ENCODE measurements at regions of chr22 and their contacts with region 1.

Region 1: DNA sequence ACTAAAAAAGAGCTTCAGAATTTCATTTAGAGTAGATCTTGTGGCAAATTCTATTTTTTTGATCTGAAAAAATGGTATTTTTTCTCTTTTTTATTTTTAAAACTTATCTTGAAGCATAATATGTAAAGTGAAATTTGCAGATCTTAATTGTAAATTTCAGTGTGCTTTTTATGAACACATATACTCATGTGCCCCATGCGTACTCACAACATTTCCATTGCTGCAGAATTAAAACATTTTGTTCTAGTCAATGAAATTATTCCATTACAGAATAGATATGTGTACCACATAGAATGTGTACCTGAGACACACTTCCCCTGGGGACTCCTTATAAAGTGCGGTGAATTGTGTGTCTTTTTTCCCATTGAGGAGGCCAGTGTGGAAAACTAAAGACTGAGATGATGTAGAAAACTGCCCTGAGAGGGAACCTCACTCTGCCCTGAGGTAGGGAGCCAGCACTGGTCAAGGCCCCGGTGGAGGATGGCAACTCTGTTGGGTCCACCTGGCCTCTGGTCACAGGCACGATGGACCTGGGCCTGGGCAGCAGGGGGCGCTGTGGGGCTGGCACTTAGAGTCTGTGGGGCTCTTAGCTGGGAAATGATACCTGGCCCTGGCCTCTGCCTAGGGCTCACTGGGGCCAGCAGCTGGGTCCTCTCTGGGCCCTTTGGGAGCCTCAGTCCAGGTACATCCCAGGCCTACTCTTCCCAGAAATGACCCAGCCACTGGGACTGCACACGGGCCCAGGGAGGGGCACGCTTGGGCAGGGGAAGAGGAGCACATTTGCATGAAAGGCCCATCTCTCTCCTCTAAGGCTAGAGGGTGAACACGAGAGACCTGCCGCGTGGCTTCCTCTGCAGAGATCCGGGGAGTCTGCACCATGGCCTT is 77.9 kb upstream of the TOP3B start:
- DNase-seq: peak; percentile 75
- ATAC-seq: peak; percentile 68
- H3K4me3 ChIP-seq: no peak overlapping the region
- H3K4me3 Mint-ChIP-seq: no peak overlapping the region
- H3K27ac ChIP-seq: no peak overlapping the region
- H3K27ac Mint-ChIP-seq: peak overlapping the region; percentile 73
- H3K4me1 ChIP-seq: peaks cover 33 to 36% of the 10 kb centered on the region in 2 donors
- H3K4me1 Mint-ChIP-seq: peaks cover 37% of the 10 kb centered on the region
- H3K27me3 ChIP-seq: no peaks in the 10 kb centered on the region
- H3K27me3 Mint-ChIP-seq: peaks cover 3% of the 10 kb centered on the region
- CTCF ChIP-seq: peak; percentile 86

Region 2: GRCh38 chr22:21916309-21916918 is 144.0 kb before region 1 on chr22:
- CTCF ChIA-PET with region 1: no interaction called
- POLR2A ChIA-PET with region 1: no interaction called
- intact Hi-C with region 1: no loop called
- DNase-seq: no peak
- ATAC-seq: no peak
- H3K4me3 ChIP-seq: no peak overlapping the region
- H3K4me3 Mint-ChIP-seq: no peak overlapping the region
- H3K27ac ChIP-seq: no peak overlapping the region
- H3K27ac Mint-ChIP-seq: no peak overlapping the region
- H3K4me1 ChIP-seq: no peaks in the 10 kb centered on the region
- H3K4me1 Mint-ChIP-seq: peaks cover 3% of the 10 kb centered on the region
- H3K27me3 ChIP-seq: no peaks in the 10 kb centered on the region
- H3K27me3 Mint-ChIP-seq: no peaks in the 10 kb centered on the region
- CTCF ChIP-seq: no peak

Region 3: DNA sequence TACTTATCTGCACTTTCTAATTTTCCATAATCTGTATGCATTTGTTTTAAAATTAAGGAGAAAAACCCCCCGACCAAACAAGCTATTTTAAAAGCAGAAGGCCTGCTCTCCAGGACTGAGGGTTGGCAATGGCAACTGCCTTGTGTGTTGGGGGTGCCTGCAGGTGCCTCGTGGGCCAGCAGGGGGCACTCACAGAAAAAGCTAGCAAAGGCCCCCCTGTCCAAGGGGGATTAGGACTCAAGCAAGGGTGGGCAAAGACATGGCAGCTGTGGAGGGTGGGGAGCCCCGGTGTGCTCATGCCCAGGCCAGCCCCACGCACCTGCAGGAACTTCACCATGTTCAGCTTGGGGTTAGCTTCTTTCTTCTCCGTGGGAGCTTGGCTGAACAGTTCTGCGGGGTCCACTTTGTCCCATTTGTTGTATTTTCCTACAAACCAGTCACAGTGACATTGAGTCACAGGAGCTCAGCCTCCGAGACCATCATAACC is 88.1 kb before region 1 on chr22:
- CTCF ChIA-PET with region 1: interaction called, 20 read pairs
- POLR2A ChIA-PET with region 1: no interaction called
- intact Hi-C with region 1: no loop called
- DNase-seq: peak; percentile 71
- ATAC-seq: peak; percentile 78
- H3K4me3 ChIP-seq: no peak overlapping the region
- H3K4me3 Mint-ChIP-seq: no peak overlapping the region
- H3K27ac ChIP-seq: no peak overlapping the region
- H3K27ac Mint-ChIP-seq: no peak overlapping the region
- H3K4me1 ChIP-seq: no peaks in the 10 kb centered on the region
- H3K4me1 Mint-ChIP-seq: peaks cover 6% of the 10 kb centered on the region
- H3K27me3 ChIP-seq: no peaks in the 10 kb centered on the region
- H3K27me3 Mint-ChIP-seq: no peaks in the 10 kb centered on the region
- CTCF ChIP-seq: peak; percentile 96

Region 4: DNA sequence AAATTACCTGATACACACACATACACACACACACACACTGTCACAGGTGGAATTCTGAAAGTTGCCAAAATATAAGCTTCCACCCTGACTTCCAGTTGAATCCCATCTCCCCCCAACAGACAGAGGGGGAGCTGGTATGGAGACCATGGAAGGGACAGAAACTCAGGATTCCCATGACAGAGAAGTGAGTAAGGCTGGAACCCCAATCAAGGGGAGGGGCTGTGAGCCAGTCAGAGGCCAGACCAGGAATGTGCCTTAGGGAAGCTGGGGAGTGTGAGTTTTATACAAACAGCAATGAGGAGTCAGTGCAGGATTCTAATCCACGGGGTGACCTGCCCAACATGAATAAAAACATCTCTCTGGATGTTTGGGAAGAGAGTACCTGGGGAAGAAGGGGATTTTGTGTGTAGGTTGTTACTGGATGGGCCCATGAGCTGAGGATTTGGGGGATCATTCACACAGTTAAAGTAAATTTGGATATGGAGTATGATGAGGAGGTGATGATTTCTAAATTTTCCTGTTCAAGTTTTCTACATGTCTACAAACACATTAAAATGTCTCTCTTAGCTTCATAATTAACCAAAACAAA is 39.2 kb before region 1 on chr22:
- CTCF ChIA-PET with region 1: no interaction called
- POLR2A ChIA-PET with region 1: no interaction called
- intact Hi-C with region 1: no loop called
- DNase-seq: no peak
- ATAC-seq: no peak
- H3K4me3 ChIP-seq: no peak overlapping the region
- H3K4me3 Mint-ChIP-seq: no peak overlapping the region
- H3K27ac ChIP-seq: no peak overlapping the region
- H3K27ac Mint-ChIP-seq: no peak overlapping the region
- H3K4me1 ChIP-seq: peaks cover 29 to 37% of the 10 kb centered on the region in 2 donors
- H3K4me1 Mint-ChIP-seq: peaks cover 46% of the 10 kb centered on the region
- H3K27me3 ChIP-seq: no peaks in the 10 kb centered on the region
- H3K27me3 Mint-ChIP-seq: no peaks in the 10 kb centered on the region
- CTCF ChIP-seq: no peak

Region 5: DNA sequence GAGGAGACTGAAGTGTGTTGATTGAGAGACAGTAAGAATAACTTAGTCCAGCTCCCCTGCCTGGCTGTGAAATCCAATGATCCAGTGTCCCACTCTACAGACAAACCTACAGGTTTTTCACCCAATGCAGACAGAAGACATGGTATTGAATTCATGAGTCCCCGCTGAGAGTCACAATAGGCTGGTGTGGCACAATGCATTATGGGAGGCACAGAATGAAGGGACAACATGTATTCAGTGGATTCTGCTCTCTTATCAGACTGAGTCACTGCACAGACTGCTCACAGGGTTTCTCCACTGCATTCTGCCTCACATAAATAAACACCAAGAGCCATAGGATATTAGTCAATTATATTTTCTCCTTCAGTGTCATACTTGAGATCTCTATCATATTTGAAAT is 22.7 kb before region 1 on chr22:
- CTCF ChIA-PET with region 1: interaction called, 122 read pairs
- POLR2A ChIA-PET with region 1: no interaction called
- intact Hi-C with region 1: loop called (anchors 2 kb)
- DNase-seq: no peak
- ATAC-seq: no peak
- H3K4me3 ChIP-seq: no peak overlapping the region
- H3K4me3 Mint-ChIP-seq: peak overlapping the region; percentile 21
- H3K27ac ChIP-seq: peak overlapping the region; percentile 75 to 81
- H3K27ac Mint-ChIP-seq: peak overlapping the region; percentile 86
- H3K4me1 ChIP-seq: peaks cover 51 to 69% of the 10 kb centered on the region in 2 donors
- H3K4me1 Mint-ChIP-seq: peaks cover 83% of the 10 kb centered on the region
- H3K27me3 ChIP-seq: no peaks in the 10 kb centered on the region
- H3K27me3 Mint-ChIP-seq: no peaks in the 10 kb centered on the region
- CTCF ChIP-seq: no peak

Region 6: GRCh38 chr22:22099833-22100812 is 39.7 kb after region 1 on chr22:
- CTCF ChIA-PET with region 1: interaction called, 26 read pairs
- POLR2A ChIA-PET with region 1: interaction called, 5 read pairs
- intact Hi-C with region 1: loop called (anchors 2 kb)
- DNase-seq: peak; percentile 49
- ATAC-seq: peak; percentile 32
- H3K4me3 ChIP-seq: no peak overlapping the region
- H3K4me3 Mint-ChIP-seq: peak overlapping the region; percentile 60
- H3K27ac ChIP-seq: peak overlapping the region; percentile 91 to 93
- H3K27ac Mint-ChIP-seq: peak overlapping the region; percentile 97
- H3K4me1 ChIP-seq: peaks cover 33 to 36% of the 10 kb centered on the region in 2 donors
- H3K4me1 Mint-ChIP-seq: peaks cover 53% of the 10 kb centered on the region
- H3K27me3 ChIP-seq: no peaks in the 10 kb centered on the region
- H3K27me3 Mint-ChIP-seq: no peaks in the 10 kb centered on the region
- CTCF ChIP-seq: peak; percentile 39

Region 7: GRCh38 chr22:22235558-22235957 is 175.1 kb after region 1 on chr22:
- CTCF ChIA-PET with region 1: interaction called, 12 read pairs
- POLR2A ChIA-PET with region 1: no interaction called
- intact Hi-C with region 1: no loop called
- DNase-seq: peak; percentile 67
- ATAC-seq: peak; percentile 24
- H3K4me3 ChIP-seq: no peak overlapping the region
- H3K4me3 Mint-ChIP-seq: peak overlapping the region; percentile 37
- H3K27ac ChIP-seq: no peak overlapping the region
- H3K27ac Mint-ChIP-seq: peak overlapping the region; percentile 53
- H3K4me1 ChIP-seq: peaks cover 16 to 27% of the 10 kb centered on the region in 2 donors
- H3K4me1 Mint-ChIP-seq: peaks cover 24% of the 10 kb centered on the region
- H3K27me3 ChIP-seq: no peaks in the 10 kb centered on the region
- H3K27me3 Mint-ChIP-seq: no peaks in the 10 kb centered on the region
- CTCF ChIP-seq: peak; percentile 48